CD8-positive, alpha-beta T cell (primary cell): ENCODE measurements at regions of chr4 and their contacts with region 1.

Region 1: GRCh38 chr4:81471588-81472288 is at the start of gene RASGEF1B:
- DNase-seq: peak; percentile 85 to 98 (median 95)
- ATAC-seq: peak; percentile 87
- H3K4me3 ChIP-seq: peak within 1 kb of the TSS; percentile 69 to 78
- H3K4me3 Mint-ChIP-seq: peak within 1 kb of the TSS; percentile 98
- H3K27ac ChIP-seq: peak within 1 kb of the TSS; percentile 91 to 96
- H3K27ac Mint-ChIP-seq: peak within 1 kb of the TSS; percentile 96
- H3K4me1 ChIP-seq: peaks cover 23% of the 10 kb centered on the region
- H3K4me1 Mint-ChIP-seq: peaks cover 42% of the 10 kb centered on the region
- H3K27me3 ChIP-seq: no peaks in the 10 kb centered on the region
- H3K27me3 Mint-ChIP-seq: no peaks in the 10 kb centered on the region
- CTCF ChIP-seq: no peak
- total RNA-seq, gene RASGEF1B: 103 to 110 TPM

Region 2: GRCh38 chr4:81405894-81406401 is 65.8 kb before region 1 on chr4:
- CTCF ChIA-PET with region 1: interaction called, 3 read pairs
- POLR2A ChIA-PET with region 1: no interaction called
- intact Hi-C with region 1: loop called (anchors 1 to 5 kb)
- DNase-seq: peak in 5 of 9 experiments; percentile 27 to 86 (median 51)
- ATAC-seq: peak; percentile 87
- H3K4me3 ChIP-seq: no peak overlapping the region
- H3K4me3 Mint-ChIP-seq: peak overlapping the region; percentile 6
- H3K27ac ChIP-seq: no peak overlapping the region
- H3K27ac Mint-ChIP-seq: no peak overlapping the region
- H3K4me1 ChIP-seq: no peaks in the 10 kb centered on the region
- H3K4me1 Mint-ChIP-seq: peaks cover 6% of the 10 kb centered on the region
- H3K27me3 ChIP-seq: peaks cover 0 to 3% of the 10 kb centered on the region in 2 experiments
- H3K27me3 Mint-ChIP-seq: peaks cover 4% of the 10 kb centered on the region
- CTCF ChIP-seq: peak; percentile 98

Region 3: DNA sequence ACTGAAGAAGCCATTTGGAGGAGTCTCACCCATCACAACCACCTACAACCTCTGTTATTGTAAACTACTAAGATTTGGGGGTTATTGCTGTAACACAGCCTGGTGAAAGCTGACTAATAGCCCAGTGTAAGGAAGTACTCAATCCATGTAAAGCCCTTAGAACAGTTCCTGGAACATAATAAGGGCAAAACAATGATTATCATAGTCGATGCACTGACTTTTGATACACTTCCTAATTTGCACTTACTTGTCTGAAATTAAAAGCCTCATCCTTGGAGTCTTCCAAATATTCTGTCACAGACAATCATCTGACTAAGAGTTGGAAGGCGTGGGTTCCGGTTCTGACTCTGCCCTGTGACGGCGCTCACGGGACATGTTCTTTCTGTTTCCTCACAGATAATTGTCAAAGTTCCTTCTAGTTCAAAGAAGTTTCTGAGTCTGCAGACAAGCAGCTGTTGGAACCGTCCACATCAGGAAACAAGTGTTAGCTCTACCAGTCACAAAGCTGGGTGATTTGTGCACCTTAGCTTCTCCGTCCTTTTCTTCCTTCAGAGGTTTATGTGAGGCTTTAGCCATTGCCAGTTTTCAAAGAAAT is 33.4 kb after region 1 on chr4:
- CTCF ChIA-PET with region 1: interaction called, 10 read pairs
- POLR2A ChIA-PET with region 1: interaction called, 8 read pairs
- intact Hi-C with region 1: loop called (anchors 5 kb)
- DNase-seq: peak; percentile 34 to 82 (median 67)
- ATAC-seq: peak; percentile 83
- H3K4me3 ChIP-seq: no peak overlapping the region
- H3K4me3 Mint-ChIP-seq: peak overlapping the region; percentile 72
- H3K27ac ChIP-seq: peak overlapping the region; percentile 3 to 69
- H3K27ac Mint-ChIP-seq: peak overlapping the region; percentile 89
- H3K4me1 ChIP-seq: peaks cover 17% of the 10 kb centered on the region
- H3K4me1 Mint-ChIP-seq: peaks cover 47% of the 10 kb centered on the region
- H3K27me3 ChIP-seq: no peaks in the 10 kb centered on the region
- H3K27me3 Mint-ChIP-seq: no peaks in the 10 kb centered on the region
- CTCF ChIP-seq: no peak

Region 4: DNA sequence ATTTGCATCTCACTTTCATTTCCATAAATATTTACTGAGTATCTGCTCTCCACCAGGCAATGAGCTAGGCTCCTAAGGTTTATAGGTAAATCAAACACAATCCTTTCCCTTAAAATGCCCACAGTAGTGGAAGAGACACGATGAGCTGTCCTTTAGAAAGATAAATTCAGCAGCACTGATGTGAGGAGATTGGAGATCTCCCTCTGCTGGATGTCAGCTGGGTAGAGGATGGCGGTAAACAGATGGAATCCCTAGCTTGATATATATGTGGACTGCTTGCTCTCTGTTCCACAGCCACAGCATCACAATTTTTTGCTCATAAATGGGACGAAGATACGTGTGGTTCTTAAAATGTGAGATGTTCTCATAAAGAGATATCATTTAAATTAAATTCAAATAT is 216.3 kb after region 1 on chr4:
- CTCF ChIA-PET with region 1: interaction called, 44 read pairs
- POLR2A ChIA-PET with region 1: interaction called, 10 read pairs
- intact Hi-C with region 1: loop called (anchors 1 to 2 kb)
- DNase-seq: peak in 3 of 9 experiments; percentile 6 to 47 (median 25)
- ATAC-seq: peak; percentile 34
- H3K4me3 ChIP-seq: no peak overlapping the region
- H3K4me3 Mint-ChIP-seq: no peak overlapping the region
- H3K27ac ChIP-seq: no peak overlapping the region
- H3K27ac Mint-ChIP-seq: no peak overlapping the region
- H3K4me1 ChIP-seq: no peaks in the 10 kb centered on the region
- H3K4me1 Mint-ChIP-seq: no peaks in the 10 kb centered on the region
- H3K27me3 ChIP-seq: no peaks in the 10 kb centered on the region
- H3K27me3 Mint-ChIP-seq: no peaks in the 10 kb centered on the region
- CTCF ChIP-seq: no peak

Region 5: GRCh38 chr4:81850701-81851100 is 379.0 kb after region 1 on chr4:
- CTCF ChIA-PET with region 1: interaction called, 205 read pairs
- POLR2A ChIA-PET with region 1: interaction called, 4 read pairs
- intact Hi-C with region 1: no loop called
- DNase-seq: no peak
- ATAC-seq: no peak
- H3K4me3 ChIP-seq: no peak overlapping the region
- H3K4me3 Mint-ChIP-seq: no peak overlapping the region
- H3K27ac ChIP-seq: no peak overlapping the region
- H3K27ac Mint-ChIP-seq: no peak overlapping the region
- H3K4me1 ChIP-seq: no peaks in the 10 kb centered on the region
- H3K4me1 Mint-ChIP-seq: no peaks in the 10 kb centered on the region
- H3K27me3 ChIP-seq: no peaks in the 10 kb centered on the region
- H3K27me3 Mint-ChIP-seq: peaks cover 2% of the 10 kb centered on the region
- CTCF ChIP-seq: no peak

Region 6: GRCh38 chr4:82192017-82192673 is 720.4 kb after region 1 on chr4:
- CTCF ChIA-PET with region 1: no interaction called
- POLR2A ChIA-PET with region 1: no interaction called
- intact Hi-C with region 1: no loop called
- DNase-seq: no peak
- ATAC-seq: no peak
- H3K4me3 ChIP-seq: no peak overlapping the region
- H3K4me3 Mint-ChIP-seq: no peak overlapping the region
- H3K27ac ChIP-seq: no peak overlapping the region
- H3K27ac Mint-ChIP-seq: no peak overlapping the region
- H3K4me1 ChIP-seq: no peaks in the 10 kb centered on the region
- H3K4me1 Mint-ChIP-seq: no peaks in the 10 kb centered on the region
- H3K27me3 ChIP-seq: no peaks in the 10 kb centered on the region
- H3K27me3 Mint-ChIP-seq: no peaks in the 10 kb centered on the region
- CTCF ChIP-seq: no peak

Region 7: DNA sequence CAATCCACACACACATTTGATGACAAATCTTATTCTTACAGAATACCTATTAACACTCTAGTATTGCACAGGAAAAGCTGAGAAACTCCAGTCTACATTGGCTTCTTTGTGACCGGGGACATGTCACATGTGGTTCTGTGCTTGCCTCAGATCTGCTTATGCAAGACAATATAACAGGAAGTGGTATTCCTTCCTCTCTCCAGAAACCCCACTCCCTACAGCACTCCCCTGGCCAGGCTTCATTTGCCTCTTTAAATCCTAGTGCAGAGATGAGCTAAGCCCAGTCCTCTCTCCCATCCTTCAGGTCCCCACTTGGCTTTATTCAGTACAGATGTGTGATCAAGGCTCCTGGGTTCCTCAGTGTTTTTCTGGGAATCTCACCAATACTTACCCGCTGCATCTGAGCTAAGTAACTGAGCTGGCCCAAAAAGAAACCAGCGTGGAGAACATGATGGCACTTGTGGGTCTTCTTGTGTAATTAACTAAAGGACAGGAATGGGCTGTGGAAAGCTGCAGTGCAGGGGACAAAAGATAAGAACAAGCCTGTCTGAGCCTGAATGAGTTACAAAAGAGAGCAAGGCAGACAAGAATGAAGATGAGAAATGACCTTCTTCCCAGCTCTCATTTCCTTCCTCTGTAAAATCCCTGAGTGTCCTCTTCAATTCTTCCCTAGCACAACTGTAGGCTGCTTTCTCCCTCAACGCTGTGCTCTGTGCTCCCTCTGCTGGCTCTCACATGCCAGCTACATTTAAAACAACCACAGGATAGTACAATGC is 796.5 kb after region 1 on chr4:
- CTCF ChIA-PET with region 1: interaction called, 27 read pairs
- POLR2A ChIA-PET with region 1: interaction called, 3 read pairs
- intact Hi-C with region 1: loop called (anchors 2 to 5 kb)
- DNase-seq: peak in 8 of 9 experiments; percentile 15 to 71 (median 46)
- ATAC-seq: peak; percentile 94
- H3K4me3 ChIP-seq: no peak overlapping the region
- H3K4me3 Mint-ChIP-seq: no peak overlapping the region
- H3K27ac ChIP-seq: no peak overlapping the region
- H3K27ac Mint-ChIP-seq: no peak overlapping the region
- H3K4me1 ChIP-seq: peaks cover 11% of the 10 kb centered on the region
- H3K4me1 Mint-ChIP-seq: peaks cover 16% of the 10 kb centered on the region
- H3K27me3 ChIP-seq: no peaks in the 10 kb centered on the region
- H3K27me3 Mint-ChIP-seq: peaks cover 6% of the 10 kb centered on the region
- CTCF ChIP-seq: peak; percentile 79

Region 8: DNA sequence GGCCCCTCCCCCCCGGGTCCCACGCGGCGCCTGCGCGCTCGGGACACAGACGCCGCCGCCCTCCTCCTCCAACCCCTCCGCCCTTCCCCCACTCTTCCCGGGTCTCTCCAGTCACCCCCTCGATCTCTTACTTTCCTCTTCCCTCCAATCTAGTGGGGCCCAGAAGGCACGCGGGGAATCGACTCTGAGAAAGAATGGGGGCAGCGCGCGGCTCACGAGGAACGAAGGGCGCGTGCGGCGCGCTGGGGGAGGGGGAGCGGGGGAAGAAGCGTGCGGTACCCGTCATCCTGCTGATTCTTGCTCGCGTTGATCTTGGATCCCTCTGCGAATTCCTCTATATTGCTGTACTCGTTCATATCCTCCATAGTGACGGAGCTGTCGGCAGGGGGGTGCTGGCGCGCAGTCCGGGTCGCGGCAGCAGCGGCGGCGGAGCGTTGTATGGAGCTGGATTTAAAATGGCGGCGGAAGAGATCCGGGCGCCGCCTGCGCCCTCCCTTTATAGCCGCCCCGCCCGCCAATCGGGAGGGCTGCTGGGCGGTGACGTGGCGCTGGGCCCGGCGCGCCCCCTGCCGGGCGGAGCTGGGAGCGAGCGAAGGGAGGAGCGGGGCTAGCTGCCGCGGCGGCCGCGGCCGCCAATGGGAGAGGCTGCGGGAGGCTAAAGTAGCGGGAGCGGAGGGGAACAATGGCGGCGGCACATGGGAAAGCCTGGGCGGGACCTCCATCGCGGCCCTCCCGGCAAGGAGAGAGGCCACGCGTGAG is 957.4 kb after region 1 on chr4:
- CTCF ChIA-PET with region 1: interaction called, 3 read pairs
- POLR2A ChIA-PET with region 1: interaction called, 5 read pairs
- intact Hi-C with region 1: loop called in 1 of 2 experiments (anchors 2 kb)
- DNase-seq: peak; percentile 87 to 96 (median 93)
- ATAC-seq: peak; percentile 62
- H3K4me3 ChIP-seq: peak overlapping the region; percentile 91 to 99
- H3K4me3 Mint-ChIP-seq: peak overlapping the region; percentile 100
- H3K27ac ChIP-seq: peak overlapping the region; percentile 99 to 100
- H3K27ac Mint-ChIP-seq: peak overlapping the region; percentile 99
- H3K4me1 ChIP-seq: peaks cover 40% of the 10 kb centered on the region
- H3K4me1 Mint-ChIP-seq: peaks cover 72% of the 10 kb centered on the region
- H3K27me3 ChIP-seq: no peaks in the 10 kb centered on the region
- H3K27me3 Mint-ChIP-seq: no peaks in the 10 kb centered on the region
- CTCF ChIP-seq: peak; percentile 90